ENCODE measurements at regions of chr17 and their contacts with region 1.

Region 1: GRCh38 chr17:74790161-74791054 is 14.3 kb upstream of the NAT9 start:
- DNase-seq: no peak
- ATAC-seq: peak; percentile 19
- H3K4me3 Mint-ChIP-seq: peak overlapping the region; percentile 39
- H3K27ac Mint-ChIP-seq: peak overlapping the region; percentile 68
- H3K4me1 Mint-ChIP-seq: peaks cover 47% of the 10 kb centered on the region
- H3K27me3 Mint-ChIP-seq: no peaks in the 10 kb centered on the region

Region 2: DNA sequence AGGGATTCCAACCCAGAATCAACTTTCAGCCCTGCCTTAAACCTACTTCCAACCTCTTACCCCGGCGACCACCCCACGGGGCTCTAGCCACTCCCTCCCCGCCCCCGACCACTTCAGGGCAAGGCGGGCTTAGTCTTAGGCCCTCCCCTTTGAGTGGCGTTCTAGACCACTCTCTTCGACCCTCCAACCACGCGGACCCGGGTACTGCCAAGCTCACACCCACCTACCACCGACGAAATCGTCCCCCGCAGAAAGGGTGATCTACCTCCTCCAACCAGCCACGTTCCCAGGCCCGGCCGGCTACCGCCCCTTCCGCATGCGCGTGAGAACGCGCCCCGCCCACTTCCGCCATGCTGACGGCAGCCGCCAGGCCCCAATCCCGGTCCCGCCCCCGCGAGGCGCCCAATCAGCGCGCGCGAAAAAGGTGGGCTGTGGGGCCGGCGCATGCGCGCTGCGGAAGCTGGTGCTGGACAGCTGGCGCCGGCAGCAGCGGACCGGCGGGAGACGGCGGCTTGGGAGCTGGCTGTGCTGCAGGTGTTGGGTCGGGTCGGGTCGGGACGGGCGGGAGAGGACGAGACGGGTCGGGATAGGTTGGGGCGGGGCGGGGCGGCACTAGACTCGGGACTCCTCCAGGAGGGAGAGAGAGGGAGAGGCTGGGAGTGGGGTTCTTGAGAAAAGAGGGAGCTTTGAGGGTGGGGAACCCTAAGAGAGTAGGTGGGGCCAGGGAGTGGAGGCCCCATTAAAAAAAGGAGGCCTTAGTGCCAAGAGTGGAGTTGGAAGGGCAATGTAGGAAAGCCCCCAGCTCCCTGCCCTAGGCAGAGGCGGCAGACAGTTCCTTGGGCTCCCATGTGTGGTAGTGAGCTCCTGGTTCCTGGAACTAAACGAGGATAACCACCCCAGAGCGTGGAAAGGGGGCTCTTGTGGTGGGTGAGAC is 14.1 kb before region 1 on chr17 and contains the start of gene NAT9:
- CTCF ChIA-PET with region 1: interaction called, 49 read pairs
- POLR2A ChIA-PET with region 1: interaction called, 3 read pairs
- DNase-seq: peak; percentile 99
- ATAC-seq: peak; percentile 83
- H3K4me3 Mint-ChIP-seq: peak within 1 kb of the TSS; percentile 97
- H3K27ac Mint-ChIP-seq: peak within 1 kb of the TSS; percentile 89
- H3K4me1 Mint-ChIP-seq: peaks cover 70% of the 10 kb centered on the region
- H3K27me3 Mint-ChIP-seq: no peaks in the 10 kb centered on the region
- total RNA-seq, gene NAT9: 28.3 to 30.7 TPM

Region 3: GRCh38 chr17:74807925-74808324 is 17.5 kb after region 1 on chr17:
- CTCF ChIA-PET with region 1: interaction called, 16 read pairs
- POLR2A ChIA-PET with region 1: no interaction called
- DNase-seq: no peak
- ATAC-seq: no peak
- H3K4me3 Mint-ChIP-seq: no peak overlapping the region
- H3K27ac Mint-ChIP-seq: no peak overlapping the region
- H3K4me1 Mint-ChIP-seq: no peaks in the 10 kb centered on the region
- H3K27me3 Mint-ChIP-seq: no peaks in the 10 kb centered on the region